A673 (cell line): ENCODE measurements at regions of chr17 and their contacts with region 1.

Region 1: DNA sequence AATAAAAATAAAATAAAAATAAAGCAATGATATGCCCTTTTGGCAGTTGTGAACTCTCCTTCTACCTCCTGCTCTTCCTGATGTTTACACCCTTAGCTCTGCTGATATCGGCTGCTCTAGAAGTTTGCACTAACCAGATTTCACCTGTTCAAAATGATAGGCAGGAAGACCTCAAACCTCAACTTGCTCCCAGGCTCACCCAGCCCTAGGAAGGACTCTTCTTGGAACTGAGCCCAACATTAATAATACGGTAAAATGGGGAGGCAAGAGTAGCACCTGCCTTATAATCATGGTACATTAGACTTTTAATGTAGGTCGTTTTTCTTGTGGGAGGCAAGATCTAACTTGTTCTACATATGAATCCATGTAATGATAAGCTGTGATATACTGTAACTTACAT is 61.2 kb upstream of the MED13 start:
- DNase-seq: no peak
- H3K4me3 ChIP-seq: no peak overlapping the region
- H3K27ac ChIP-seq: no peak overlapping the region
- H3K4me1 ChIP-seq: peaks cover 2% of the 10 kb centered on the region
- H3K27me3 ChIP-seq: no peaks in the 10 kb centered on the region
- CTCF ChIP-seq: no peak

Region 2: GRCh38 chr17:61097781-61098180 is 1028.5 kb before region 1 on chr17:
- CTCF ChIA-PET with region 1: no interaction called
- POLR2A ChIA-PET with region 1: no interaction called
- intact Hi-C with region 1: no loop called
- DNase-seq: no peak
- H3K4me3 ChIP-seq: no peak overlapping the region
- H3K27ac ChIP-seq: no peak overlapping the region
- H3K4me1 ChIP-seq: no peaks in the 10 kb centered on the region
- H3K27me3 ChIP-seq: no peaks in the 10 kb centered on the region
- CTCF ChIP-seq: no peak

Region 3: DNA sequence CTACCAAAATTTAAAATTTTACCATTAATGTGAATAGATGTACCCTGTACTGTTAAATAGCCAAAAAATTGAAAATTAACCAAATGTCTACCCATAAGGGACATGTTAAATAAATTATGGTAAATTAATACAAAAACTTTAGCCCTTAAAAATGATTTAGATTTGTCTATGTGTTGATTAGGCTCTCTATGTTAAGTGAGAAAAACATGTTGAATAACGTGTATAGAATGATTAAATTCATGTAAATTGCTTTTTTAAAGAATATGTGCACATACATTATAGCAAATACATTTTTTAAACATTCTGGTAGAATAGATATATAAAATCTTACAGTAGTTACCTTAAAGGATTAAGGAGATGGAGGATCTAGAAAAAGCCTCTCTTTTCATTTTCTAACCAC is 322.5 kb before region 1 on chr17:
- CTCF ChIA-PET with region 1: no interaction called
- POLR2A ChIA-PET with region 1: no interaction called
- intact Hi-C with region 1: no loop called
- DNase-seq: no peak
- H3K4me3 ChIP-seq: no peak overlapping the region
- H3K27ac ChIP-seq: no peak overlapping the region
- H3K4me1 ChIP-seq: no peaks in the 10 kb centered on the region
- H3K27me3 ChIP-seq: no peaks in the 10 kb centered on the region
- CTCF ChIP-seq: no peak

Region 4: GRCh38 chr17:61908292-61909037 is 217.8 kb before region 1 on chr17:
- CTCF ChIA-PET with region 1: no interaction called
- POLR2A ChIA-PET with region 1: no interaction called
- intact Hi-C with region 1: no loop called
- DNase-seq: no peak
- H3K4me3 ChIP-seq: no peak overlapping the region
- H3K27ac ChIP-seq: no peak overlapping the region
- H3K4me1 ChIP-seq: no peaks in the 10 kb centered on the region
- H3K27me3 ChIP-seq: no peaks in the 10 kb centered on the region
- CTCF ChIP-seq: no peak

Region 5: GRCh38 chr17:62030209-62030608 is 96.1 kb before region 1 on chr17:
- CTCF ChIA-PET with region 1: no interaction called
- POLR2A ChIA-PET with region 1: no interaction called
- intact Hi-C with region 1: no loop called
- DNase-seq: no peak
- H3K4me3 ChIP-seq: no peak overlapping the region
- H3K27ac ChIP-seq: no peak overlapping the region
- H3K4me1 ChIP-seq: no peaks in the 10 kb centered on the region
- H3K27me3 ChIP-seq: no peaks in the 10 kb centered on the region
- CTCF ChIP-seq: no peak

Region 6: DNA sequence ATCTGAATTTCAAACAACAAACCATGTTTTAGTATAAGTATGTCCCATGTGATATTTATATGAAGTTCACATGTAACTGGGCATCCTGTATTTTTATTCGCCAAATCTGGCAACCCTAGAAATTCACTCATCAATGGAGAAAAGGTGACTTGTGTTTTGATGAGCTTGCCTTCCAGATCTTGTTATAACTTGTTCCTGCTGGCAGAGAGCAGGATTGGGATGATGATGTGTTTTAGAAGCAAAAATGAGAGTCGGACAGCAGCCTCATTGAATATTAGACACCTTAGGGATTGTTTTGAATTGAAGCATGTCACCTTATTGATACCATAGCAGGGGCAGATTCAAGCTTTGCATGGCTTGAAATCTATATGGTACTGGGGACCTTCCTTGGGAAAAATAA is 24.2 kb after region 1 on chr17:
- CTCF ChIA-PET with region 1: no interaction called
- POLR2A ChIA-PET with region 1: interaction called, 16 read pairs
- intact Hi-C with region 1: no loop called
- DNase-seq: no peak
- H3K4me3 ChIP-seq: no peak overlapping the region
- H3K27ac ChIP-seq: no peak overlapping the region
- H3K4me1 ChIP-seq: no peaks in the 10 kb centered on the region
- H3K27me3 ChIP-seq: no peaks in the 10 kb centered on the region
- CTCF ChIP-seq: no peak